PC-9 (cell line): ENCODE measurements at regions of chr6 and their contacts with region 1.

Region 1: DNA sequence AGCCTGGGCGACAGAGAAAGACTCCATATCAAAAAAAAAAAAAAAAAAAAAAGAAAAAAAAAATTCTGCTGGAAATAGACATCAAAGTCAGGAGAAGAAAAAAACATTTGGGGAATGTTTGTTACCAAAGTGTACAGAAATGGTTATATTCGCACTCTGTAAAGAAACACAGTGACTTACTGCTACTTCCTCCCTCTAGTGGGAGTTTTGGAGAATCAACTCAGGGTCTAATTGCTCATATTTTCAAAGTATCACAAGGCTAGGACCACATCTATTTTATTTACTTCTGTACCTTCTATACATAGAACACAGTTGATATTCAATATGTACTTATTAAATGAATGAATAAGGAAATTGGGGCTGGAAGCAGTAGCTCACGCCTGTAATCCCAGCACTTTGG is 24.4 kb downstream of the ARG1 start:
- DNase-seq: no peak
- H3K4me3 ChIP-seq: no peak overlapping the region
- H3K27ac ChIP-seq: no peak overlapping the region
- H3K4me1 ChIP-seq: no peaks in the 10 kb centered on the region
- H3K27me3 ChIP-seq: no peaks in the 10 kb centered on the region
- CTCF ChIP-seq: peak; percentile 50; the same call in 1 of the 2 replicates

Region 2: GRCh38 chr6:131368198-131368911 is 229.1 kb before region 1 on chr6:
- CTCF ChIA-PET with region 1: no interaction called
- POLR2A ChIA-PET with region 1: no interaction called
- intact Hi-C with region 1: no loop called
- DNase-seq: peak in 1 of 2 experiments; percentile 10
- H3K4me3 ChIP-seq: no peak overlapping the region
- H3K27ac ChIP-seq: no peak overlapping the region
- H3K4me1 ChIP-seq: no peaks in the 10 kb centered on the region
- H3K27me3 ChIP-seq: no peaks in the 10 kb centered on the region
- CTCF ChIP-seq: no peak

Region 3: GRCh38 chr6:131586543-131586942 is 10.9 kb before region 1 on chr6:
- CTCF ChIA-PET with region 1: no interaction called
- POLR2A ChIA-PET with region 1: interaction called, 13 read pairs
- intact Hi-C with region 1: no loop called
- DNase-seq: no peak
- H3K4me3 ChIP-seq: no peak overlapping the region
- H3K27ac ChIP-seq: no peak overlapping the region
- H3K4me1 ChIP-seq: no peaks in the 10 kb centered on the region
- H3K27me3 ChIP-seq: no peaks in the 10 kb centered on the region
- CTCF ChIP-seq: no peak